A673 (cell line): ENCODE measurements at regions of chr22 and their contacts with region 1.

Region 1: GRCh38 chr22:24555157-24556039 is at the start of gene SNRPD3:
- DNase-seq: peak; percentile 99
- H3K4me3 ChIP-seq: peak within 1 kb of the TSS; percentile 93
- H3K27ac ChIP-seq: peak within 1 kb of the TSS; percentile 97
- H3K4me1 ChIP-seq: peaks cover 18% of the 10 kb centered on the region
- H3K27me3 ChIP-seq: no peaks in the 10 kb centered on the region
- CTCF ChIP-seq: no peak
- total RNA-seq, gene SNRPD3: 216 and 220 TPM in 2 replicates

Region 2: DNA sequence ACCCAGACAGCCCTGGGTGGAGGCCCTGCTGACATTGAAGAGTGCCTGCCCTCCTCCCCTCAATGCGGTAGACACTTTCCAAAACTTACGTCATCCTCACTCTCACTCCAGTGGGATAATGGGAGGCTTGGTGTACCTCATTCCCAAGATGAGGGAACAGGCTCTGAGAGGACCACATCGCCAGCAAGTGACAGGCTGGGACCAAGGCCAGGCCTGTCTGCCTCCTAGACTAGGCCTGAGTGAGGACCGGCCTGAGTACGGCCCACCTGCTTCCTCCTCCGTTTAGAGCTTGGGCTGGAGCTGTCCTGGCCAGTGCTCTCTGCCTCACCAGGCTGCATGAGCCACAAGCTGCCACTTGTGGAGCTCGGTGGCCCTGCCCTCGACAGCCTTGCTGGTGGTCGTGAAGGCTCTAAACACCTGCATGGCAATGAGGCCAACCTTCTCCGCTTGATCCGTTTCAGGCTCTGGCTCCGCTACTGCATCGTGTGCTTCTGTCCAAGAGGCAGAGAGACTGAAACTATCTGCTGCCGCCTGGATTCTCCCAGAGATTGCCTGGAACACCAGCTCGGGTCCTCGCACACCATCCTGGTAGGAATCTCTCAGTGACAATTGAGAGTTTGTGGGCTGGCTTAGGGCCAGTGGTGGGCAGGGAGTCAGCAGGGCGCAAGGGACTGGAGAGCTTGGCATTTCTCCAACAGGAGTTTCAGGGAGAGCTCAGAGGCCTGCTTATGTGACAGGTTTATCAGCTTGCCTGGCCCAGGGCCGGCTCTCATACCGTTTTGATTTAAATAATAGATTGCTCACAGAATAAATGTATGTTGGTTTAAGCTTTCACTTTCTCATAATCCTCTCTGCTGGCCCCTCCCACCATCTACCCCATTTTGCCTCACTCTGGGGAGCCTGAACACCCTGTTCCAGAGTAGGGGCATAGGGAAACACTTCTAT is 28.1 kb after region 1 on chr22:
- CTCF ChIA-PET with region 1: no interaction called
- POLR2A ChIA-PET with region 1: interaction called, 11 read pairs
- intact Hi-C with region 1: no loop called
- DNase-seq: peak; percentile 54
- H3K4me3 ChIP-seq: no peak overlapping the region
- H3K27ac ChIP-seq: peak overlapping the region; percentile 55
- H3K4me1 ChIP-seq: peaks cover 26% of the 10 kb centered on the region
- H3K27me3 ChIP-seq: no peaks in the 10 kb centered on the region
- CTCF ChIP-seq: no peak